Heart left ventricle (tissue), 16 donors: ENCODE measurements at regions of chr7 and their contacts with region 1.

Region 1: DNA sequence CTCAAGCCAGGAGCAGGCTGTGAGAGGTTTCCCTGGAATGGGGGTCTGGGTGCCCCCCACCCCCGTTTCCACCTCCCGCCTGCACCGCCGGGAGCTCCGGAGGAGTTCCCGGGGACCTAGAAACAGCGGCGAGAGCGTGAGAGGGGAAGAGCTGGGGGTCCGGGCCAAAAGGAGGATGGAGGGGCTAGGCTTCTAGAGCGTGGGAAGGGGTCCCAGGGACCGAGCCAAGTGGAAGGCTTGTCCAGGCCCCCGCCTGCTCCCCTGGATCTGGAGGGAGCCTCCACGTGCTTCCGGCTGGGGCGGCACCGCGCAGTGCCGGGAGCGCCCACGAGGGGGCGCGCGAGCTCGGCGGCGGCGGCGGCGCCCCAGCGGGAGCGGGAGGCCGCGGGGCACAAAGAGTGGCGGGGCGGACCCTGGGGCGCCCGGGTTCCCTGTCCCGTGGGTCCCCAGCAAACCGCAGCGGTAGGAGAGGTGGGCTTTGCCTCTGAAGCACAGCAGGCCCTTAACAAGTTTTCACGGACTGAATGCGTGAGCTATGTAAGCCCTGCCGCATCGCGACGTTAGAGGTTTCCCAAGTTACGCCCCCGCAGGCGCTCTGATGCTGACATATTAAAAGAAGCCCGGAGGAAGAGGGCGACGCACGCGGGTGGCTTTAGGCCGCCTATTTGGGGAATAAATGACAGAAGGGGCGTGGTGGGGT is 104.4 kb upstream of the LRRC4 start:
- DNase-seq: peak; percentile 31 to 73 (median 51)
- ATAC-seq: peak in 3 of 4 donors; percentile 88 to 97 (median 94)
- H3K4me3 ChIP-seq: peak overlapping the region; percentile 28 to 85 (median 54)
- H3K27ac ChIP-seq: no peak overlapping the region
- H3K4me1 ChIP-seq: peaks cover 0 to 33% (median 11%) of the 10 kb centered on the region in 12 donors
- H3K27me3 ChIP-seq: peaks cover 0 to 53% (median 29%) of the 10 kb centered on the region in 9 donors
- CTCF ChIP-seq: peak; percentile 53 to 99 (median 92)
- POLR2A ChIP-seq: no peak

Region 2: DNA sequence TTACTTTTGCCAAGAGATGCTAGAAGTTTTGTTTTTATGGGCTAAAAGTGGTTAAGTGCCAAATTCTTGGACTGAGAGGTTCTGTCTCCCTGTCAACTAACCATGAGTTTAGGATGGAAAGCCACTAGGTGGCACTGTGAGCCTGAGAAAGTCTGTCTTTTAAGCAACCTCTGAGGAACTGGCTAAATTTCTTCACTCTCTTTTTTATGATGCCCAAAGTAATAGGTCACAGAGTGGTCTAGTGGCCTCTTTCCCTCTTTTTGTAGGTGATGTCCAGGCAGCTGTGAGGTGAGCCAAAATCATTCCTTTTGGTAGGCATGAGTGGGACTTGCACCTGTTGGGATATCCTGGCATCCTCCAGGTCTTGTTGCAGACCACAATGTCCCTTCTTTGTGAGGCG is 426.9 kb before region 1 on chr7:
- intact Hi-C with region 1: loop called in 4 of 10 experiments (anchors 2 to 10 kb)
- DNase-seq: peak in 4 of 5 donors; percentile 57 to 73 (median 70)
- ATAC-seq: peak; percentile 27 to 86 (median 84)
- H3K4me3 ChIP-seq: no peak overlapping the region
- H3K27ac ChIP-seq: no peak overlapping the region
- H3K4me1 ChIP-seq: peaks cover 0 to 7% (median 0%) of the 10 kb centered on the region in 12 donors
- H3K27me3 ChIP-seq: no peaks in the 10 kb centered on the region
- CTCF ChIP-seq: peak; percentile 52 to 90 (median 80)
- POLR2A ChIP-seq: no peak

Region 3: GRCh38 chr7:128031901-128032604 is 103.6 kb before region 1 on chr7:
- intact Hi-C with region 1: no loop called
- DNase-seq: peak; percentile 36 to 77 (median 55)
- ATAC-seq: peak; percentile 59 to 84 (median 78)
- H3K4me3 ChIP-seq: peak overlapping the region; percentile 34 to 79 (median 60)
- H3K27ac ChIP-seq: peak overlapping the region in 7 of 12 donors; percentile 27 to 66 (median 42)
- H3K4me1 ChIP-seq: peaks cover 0 to 42% (median 12%) of the 10 kb centered on the region in 12 donors
- H3K27me3 ChIP-seq: no peaks in the 10 kb centered on the region
- CTCF ChIP-seq: peak in 6 of 12 donors; percentile 12 to 49 (median 28)
- POLR2A ChIP-seq: no peak

Region 4: GRCh38 chr7:128076796-128077271 is 58.8 kb before region 1 on chr7:
- intact Hi-C with region 1: no loop called
- DNase-seq: peak; percentile 36 to 76 (median 45)
- ATAC-seq: peak in 1 of 4 donors; percentile 33
- H3K4me3 ChIP-seq: no peak overlapping the region
- H3K27ac ChIP-seq: no peak overlapping the region
- H3K4me1 ChIP-seq: peaks cover 0 to 36% (median 17%) of the 10 kb centered on the region in 12 donors
- H3K27me3 ChIP-seq: no peaks in the 10 kb centered on the region
- CTCF ChIP-seq: no peak
- POLR2A ChIP-seq: no peak

Region 5: GRCh38 chr7:128201051-128201689 is 65.5 kb after region 1 on chr7:
- intact Hi-C with region 1: loop called in 3 of 10 experiments (anchors 5 kb)
- DNase-seq: no peak
- ATAC-seq: no peak
- H3K4me3 ChIP-seq: peak overlapping the region in 6 of 12 donors; percentile 1 to 34 (median 14)
- H3K27ac ChIP-seq: no peak overlapping the region
- H3K4me1 ChIP-seq: peaks cover 0 to 19% (median 5%) of the 10 kb centered on the region in 12 donors
- H3K27me3 ChIP-seq: peaks cover 7 to 75% (median 24%) of the 10 kb centered on the region in 9 donors
- CTCF ChIP-seq: no peak
- POLR2A ChIP-seq: no peak